Gastrocnemius medialis (tissue), 4 donors: ENCODE measurements at regions of chr3 and their contacts with region 1.

Region 1: DNA sequence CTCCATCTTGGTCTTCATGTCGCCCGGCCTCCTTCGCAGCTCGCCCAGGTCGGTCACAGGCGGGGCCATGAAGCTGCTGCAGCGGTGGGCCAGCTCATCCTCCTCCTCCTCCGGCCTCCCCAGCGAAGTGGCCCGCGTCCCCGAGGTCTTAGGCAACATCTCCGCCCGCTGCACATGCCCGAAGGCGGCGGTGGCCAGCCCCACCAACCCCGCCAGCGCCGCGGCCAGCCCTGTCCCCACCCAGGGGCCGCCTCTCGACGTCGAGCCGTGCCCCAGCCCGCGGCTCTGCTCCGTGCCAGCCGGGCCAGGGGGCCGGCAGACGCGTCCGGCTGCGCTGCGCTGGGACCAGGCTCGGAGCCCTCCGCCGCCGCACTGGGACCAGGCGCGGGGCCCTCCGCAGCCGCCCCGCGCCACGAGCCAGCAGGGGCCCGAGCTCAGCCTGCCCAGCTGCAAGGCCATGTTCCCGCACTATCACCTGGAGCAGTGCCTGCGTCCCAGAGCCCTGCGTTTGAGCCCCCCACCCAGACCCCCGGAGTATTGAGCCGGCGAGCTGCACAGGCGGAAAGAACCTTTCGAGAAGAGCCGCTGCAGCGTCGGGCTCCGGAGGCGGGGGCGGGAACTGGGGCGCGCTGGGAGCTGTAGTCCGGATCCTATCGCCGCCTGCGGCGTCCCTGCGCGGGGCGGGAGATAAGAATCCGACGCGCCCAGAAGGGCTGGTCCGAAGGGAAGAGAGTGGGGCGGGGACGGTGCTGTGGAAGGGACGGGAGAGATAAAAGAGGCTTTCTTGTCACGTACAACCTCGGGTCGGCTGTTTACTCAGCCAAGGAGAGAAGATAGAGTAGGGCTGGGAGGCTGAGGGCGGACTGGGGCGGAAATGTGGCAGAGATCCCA is at the start of gene CPOX:
- DNase-seq: peak; percentile 63 to 73
- ATAC-seq: peak; percentile 94 to 95
- H3K4me3 ChIP-seq: peak within 1 kb of the TSS; percentile 73 to 91 (median 78)
- H3K27ac ChIP-seq: peak within 1 kb of the TSS; percentile 72 to 85 (median 78)
- H3K4me1 ChIP-seq: peaks cover 9 to 12% of the 10 kb centered on the region in 2 donors
- H3K27me3 ChIP-seq: no peaks in the 10 kb centered on the region
- CTCF ChIP-seq: no peak
- POLR2A ChIP-seq: peak; percentile 32 to 39
- total RNA-seq, gene CPOX: 9.8 to 25.6 (median 15.1) TPM

Region 2: GRCh38 chr3:98732286-98733052 is 139.2 kb after region 1 on chr3:
- in situ Hi-C with region 1: no loop called
- intact Hi-C with region 1: loop called (anchors 10 kb)
- DNase-seq: peak; percentile 37 to 44
- ATAC-seq: peak; percentile 65
- H3K4me3 ChIP-seq: peak overlapping the region; percentile 77 to 97 (median 83)
- H3K27ac ChIP-seq: peak overlapping the region; percentile 77 to 90 (median 82)
- H3K4me1 ChIP-seq: peaks cover 7 to 10% of the 10 kb centered on the region in 2 donors
- H3K27me3 ChIP-seq: no peaks in the 10 kb centered on the region
- CTCF ChIP-seq: no peak
- POLR2A ChIP-seq: peak; percentile 45 to 75

Region 3: DNA sequence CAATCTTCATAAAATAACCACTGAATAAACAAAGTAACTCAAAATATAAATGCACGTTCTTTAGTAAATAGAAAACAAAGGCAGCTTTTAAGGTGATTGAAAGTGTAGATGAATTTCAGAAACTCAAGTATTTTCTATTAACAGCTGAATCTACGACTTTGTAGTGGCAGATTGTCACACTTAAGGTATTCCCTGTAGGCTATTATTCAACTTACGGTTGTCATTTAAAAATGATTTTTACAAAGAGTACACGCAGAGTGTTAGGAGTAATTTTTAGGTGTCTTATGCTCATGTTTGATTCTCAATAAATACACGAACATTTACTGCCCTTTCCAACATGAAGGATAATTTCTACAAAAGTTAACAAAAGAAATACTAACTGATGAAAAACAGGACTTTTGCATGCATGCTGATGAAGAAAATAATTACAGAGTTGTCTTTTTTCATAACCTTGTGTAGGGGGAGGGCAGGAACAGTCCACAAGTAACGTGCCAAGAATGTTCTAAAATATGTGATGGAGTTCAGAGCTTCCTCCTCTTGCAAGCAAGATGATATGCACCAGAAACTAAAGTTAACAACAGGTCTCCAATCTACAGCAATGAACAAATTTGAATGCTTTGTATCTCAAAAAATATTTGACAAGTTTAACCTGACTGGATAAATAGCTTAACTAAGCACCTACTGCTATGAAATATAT is 291.5 kb after region 1 on chr3:
- in situ Hi-C with region 1: no loop called
- intact Hi-C with region 1: no loop called
- DNase-seq: no peak
- ATAC-seq: no peak
- H3K4me3 ChIP-seq: no peak overlapping the region
- H3K27ac ChIP-seq: no peak overlapping the region
- H3K4me1 ChIP-seq: peaks cover 6 to 11% of the 10 kb centered on the region in 2 donors
- H3K27me3 ChIP-seq: no peaks in the 10 kb centered on the region
- CTCF ChIP-seq: no peak
- POLR2A ChIP-seq: no peak

Region 4: GRCh38 chr3:98901392-98902350 is 308.4 kb after region 1 on chr3 and contains the start of gene DCBLD2:
- in situ Hi-C with region 1: no loop called
- intact Hi-C with region 1: loop called (anchors 5 kb)
- DNase-seq: peak; percentile 98
- ATAC-seq: peak; percentile 99
- H3K4me3 ChIP-seq: peak within 1 kb of the TSS; percentile 83 to 96 (median 88)
- H3K27ac ChIP-seq: peak within 1 kb of the TSS; percentile 87 to 91 (median 89)
- H3K4me1 ChIP-seq: peaks cover 4 to 15% of the 10 kb centered on the region in 2 donors
- H3K27me3 ChIP-seq: no peaks in the 10 kb centered on the region
- CTCF ChIP-seq: no peak
- POLR2A ChIP-seq: peak; percentile 87 to 95
- total RNA-seq, gene DCBLD2: 5.6 to 9.0 (median 6.7) TPM